GM12878 (cell line): ENCODE measurements at regions of chr22 and their contacts with region 1.

Region 1: GRCh38 chr22:32389685-32390084 is 22.4 kb downstream of the RTCB start:
- DNase-seq: no peak
- ATAC-seq: no peak; the same call in 2 of the 3 replicates
- H3K4me3 ChIP-seq: no peak overlapping the region
- H3K27ac ChIP-seq: no peak overlapping the region
- H3K4me1 ChIP-seq: no peaks in the 10 kb centered on the region
- H3K27me3 ChIP-seq: no peaks in the 10 kb centered on the region
- CTCF ChIP-seq: peak in 1 of 3 experiments; percentile 34; a peak in 2 of 6 replicates
- EP300 ChIP-seq: no peak
- POLR2A ChIP-seq: no peak
- RAD21 ChIP-seq: no peak

Region 2: GRCh38 chr22:32343941-32344340 is 45.7 kb before region 1 on chr22:
- CTCF ChIA-PET with region 1: no interaction called
- POLR2A ChIA-PET with region 1: no interaction called
- RAD21 ChIA-PET with region 1: no interaction called
- SMC1A ChIA-PET with region 1: no interaction called
- in situ Hi-C with region 1: no loop called
- intact Hi-C with region 1: no loop called
- DNase-seq: no peak
- ATAC-seq: no peak
- H3K4me3 ChIP-seq: no peak overlapping the region
- H3K27ac ChIP-seq: no peak overlapping the region
- H3K4me1 ChIP-seq: no peaks in the 10 kb centered on the region
- H3K27me3 ChIP-seq: no peaks in the 10 kb centered on the region; a peak in 2 of 4 replicates
- CTCF ChIP-seq: no peak
- EP300 ChIP-seq: no peak
- POLR2A ChIP-seq: no peak
- RAD21 ChIP-seq: no peak

Region 3: DNA sequence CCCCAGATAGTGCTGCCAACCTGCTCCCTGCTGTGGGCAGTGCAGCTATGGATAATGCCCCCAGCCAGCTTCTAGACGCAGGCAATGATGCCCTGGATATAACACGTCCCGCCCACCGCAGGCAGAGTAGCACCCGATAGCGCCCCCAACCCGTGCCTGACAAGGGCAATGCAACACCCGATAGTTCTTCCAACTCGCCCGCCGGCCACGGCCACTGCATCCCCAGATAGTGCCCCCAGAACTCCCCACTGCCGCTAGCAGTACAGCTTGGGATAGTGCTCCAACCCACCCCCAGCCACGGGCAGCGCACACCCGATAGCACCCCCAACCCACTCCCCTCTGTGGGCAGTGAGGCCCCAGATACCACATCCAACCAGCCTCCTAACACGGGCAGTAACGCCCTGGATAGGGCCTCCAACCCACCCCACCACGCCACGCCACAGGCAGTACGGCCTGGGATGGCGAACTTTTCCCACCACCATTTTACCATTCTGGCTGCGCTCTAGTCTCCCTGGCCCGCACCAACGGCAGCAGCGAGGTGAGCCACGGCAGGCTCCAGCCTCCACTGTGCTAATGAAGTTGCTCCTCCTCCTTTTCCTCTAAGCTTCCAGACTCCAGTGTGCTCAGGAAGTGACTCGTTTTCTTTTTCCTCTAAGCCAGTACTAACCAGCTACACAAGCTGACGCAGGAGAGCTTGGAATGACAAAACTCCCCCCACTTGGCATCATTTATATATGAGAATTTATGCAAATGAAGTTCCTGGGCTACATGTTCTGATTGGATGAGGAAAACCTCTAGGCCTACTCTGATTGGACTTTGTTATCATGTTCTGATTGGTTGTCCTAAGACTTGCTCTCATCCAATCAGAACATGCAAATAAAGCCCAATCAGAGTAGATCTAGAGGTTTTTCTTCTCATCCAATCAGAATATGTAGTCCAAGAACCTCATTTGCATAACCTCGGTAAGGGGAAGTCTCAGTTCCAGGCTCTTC is 35.0 kb before region 1 on chr22:
- CTCF ChIA-PET with region 1: no interaction called
- POLR2A ChIA-PET with region 1: no interaction called
- RAD21 ChIA-PET with region 1: no interaction called
- SMC1A ChIA-PET with region 1: no interaction called
- in situ Hi-C with region 1: no loop called
- intact Hi-C with region 1: no loop called
- DNase-seq: no peak
- ATAC-seq: no peak
- H3K4me3 ChIP-seq: no peak overlapping the region
- H3K27ac ChIP-seq: no peak overlapping the region
- H3K4me1 ChIP-seq: no peaks in the 10 kb centered on the region
- H3K27me3 ChIP-seq: no peaks in the 10 kb centered on the region
- CTCF ChIP-seq: no peak
- EP300 ChIP-seq: no peak
- POLR2A ChIP-seq: no peak
- RAD21 ChIP-seq: no peak

Region 4: DNA sequence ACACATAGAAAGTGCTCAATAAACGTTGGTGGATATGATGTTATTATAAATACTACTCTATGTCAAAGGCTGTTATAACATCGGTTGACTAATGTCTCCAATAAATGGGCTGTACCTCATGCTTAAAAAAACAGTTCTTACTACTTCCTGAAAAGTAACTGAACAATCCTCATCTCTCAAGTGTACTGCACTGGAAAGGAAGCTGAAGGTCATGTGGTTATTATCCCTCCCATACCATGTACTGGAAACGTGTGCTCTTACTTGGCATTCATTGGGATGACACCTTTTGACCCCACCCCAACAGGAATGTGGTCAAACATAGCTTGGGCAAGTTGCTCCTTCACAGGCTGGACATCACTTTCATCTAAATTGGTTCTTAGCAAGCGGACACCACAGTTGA is 11.8 kb after region 1 on chr22:
- CTCF ChIA-PET with region 1: interaction called, 10 read pairs
- POLR2A ChIA-PET with region 1: no interaction called
- RAD21 ChIA-PET with region 1: no interaction called
- SMC1A ChIA-PET with region 1: no interaction called
- in situ Hi-C with region 1: no loop called
- intact Hi-C with region 1: no loop called
- DNase-seq: no peak
- ATAC-seq: no peak
- H3K4me3 ChIP-seq: no peak overlapping the region
- H3K27ac ChIP-seq: no peak overlapping the region
- H3K4me1 ChIP-seq: no peaks in the 10 kb centered on the region
- H3K27me3 ChIP-seq: no peaks in the 10 kb centered on the region
- CTCF ChIP-seq: no peak
- EP300 ChIP-seq: no peak
- POLR2A ChIP-seq: no peak
- RAD21 ChIP-seq: no peak